Astrocyte of the cerebellum (primary cell): ENCODE measurements at regions of chr5 and their contacts with region 1.

Region 1: DNA sequence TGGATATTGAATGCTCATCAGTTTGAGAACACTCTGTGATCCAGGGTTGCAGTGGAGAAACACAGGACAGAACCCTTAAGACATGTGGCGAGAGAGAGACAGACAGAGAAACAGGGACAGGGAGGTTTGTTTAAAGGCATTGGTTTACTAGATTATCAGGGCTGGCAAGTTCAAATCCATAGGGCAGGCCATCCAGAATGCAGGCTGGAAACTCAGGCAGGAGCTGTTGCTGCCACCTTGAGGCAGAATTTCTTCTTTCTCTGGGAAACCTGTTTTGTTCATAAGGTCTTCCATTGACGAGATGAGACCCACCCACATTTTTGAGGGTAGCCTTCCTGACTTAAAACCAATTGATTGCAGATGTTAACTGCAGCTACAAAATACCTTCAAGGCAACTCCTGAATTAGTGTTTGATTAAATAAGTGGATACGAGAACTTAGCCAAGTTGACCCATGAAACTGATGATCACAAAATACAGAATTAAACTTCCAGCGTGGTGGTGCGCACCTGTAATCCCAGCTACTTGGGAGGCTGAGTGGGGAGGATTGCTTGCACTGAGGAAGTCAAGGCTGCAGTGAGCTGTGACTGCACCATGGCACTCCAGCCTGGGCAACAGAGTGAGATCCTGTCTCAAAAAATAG is 55.9 kb downstream of the NSUN2 start:
- DNase-seq: peak; percentile 57
- H3K4me3 ChIP-seq: no peak overlapping the region
- CTCF ChIP-seq: peak; percentile 71

Region 2: GRCh38 chr5:5492087-5492933 is 1084.7 kb before region 1 on chr5:
- in situ Hi-C with region 1: loop called (anchors 25 kb)
- DNase-seq: peak; percentile 47
- H3K4me3 ChIP-seq: no peak overlapping the region
- CTCF ChIP-seq: peak; percentile 73